ENCODE measurements at regions of chr1 and their contacts with region 1.

Region 1: GRCh38 chr1:224623743-224624333 is 7.7 kb downstream of the CNIH3 start:
- DNase-seq: peak; percentile 94
- H3K4me3 Mint-ChIP-seq: peak overlapping the region; percentile 65
- H3K27ac Mint-ChIP-seq: peak overlapping the region; percentile 98
- H3K4me1 Mint-ChIP-seq: peaks cover 49% of the 10 kb centered on the region
- H3K27me3 Mint-ChIP-seq: peaks cover 21% of the 10 kb centered on the region

Region 2: DNA sequence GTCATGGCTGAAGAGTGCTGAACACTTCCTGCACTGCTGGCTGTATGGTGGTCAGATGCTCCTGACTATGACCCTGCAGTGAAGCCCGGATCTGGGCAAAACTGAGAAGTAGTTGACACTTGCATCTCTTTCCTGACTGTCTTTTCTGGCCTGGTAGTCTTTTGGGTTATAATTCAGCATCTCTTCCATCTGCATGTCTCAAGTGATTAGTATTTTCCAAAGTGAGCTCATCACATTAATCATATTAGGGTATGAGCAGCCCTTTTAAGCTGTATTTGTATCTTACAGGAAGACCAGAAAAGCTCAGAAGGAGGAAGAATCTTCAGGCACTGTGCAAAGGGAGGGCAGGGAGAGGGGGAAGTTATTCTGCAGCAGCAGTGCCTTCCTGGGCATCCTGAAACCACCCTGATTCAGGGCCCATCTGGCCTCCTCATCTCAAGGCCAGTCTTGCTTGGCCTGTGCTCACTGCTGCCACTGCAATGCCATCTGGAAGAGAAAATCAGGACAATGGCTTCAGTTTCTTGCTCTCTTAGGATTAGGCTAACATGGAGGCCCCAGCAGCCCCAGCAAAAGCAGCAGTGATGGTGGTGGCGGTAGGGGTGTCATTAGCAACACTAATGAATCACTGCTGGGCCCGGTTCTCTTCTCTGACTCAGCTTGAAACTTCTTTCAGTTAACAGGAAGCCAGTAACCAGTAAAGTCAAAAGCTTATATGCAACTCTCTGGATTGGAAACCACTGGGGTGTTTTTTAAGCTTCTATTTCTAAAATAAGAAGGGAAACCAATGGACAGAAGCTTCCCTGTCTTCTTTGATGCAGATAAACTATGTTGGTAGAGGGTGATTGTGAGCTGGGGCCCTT is 125.9 kb before region 1 on chr1:
- CTCF ChIA-PET with region 1: no interaction called
- POLR2A ChIA-PET with region 1: interaction called, 24 read pairs
- DNase-seq: peak; percentile 86
- H3K4me3 Mint-ChIP-seq: peak overlapping the region; percentile 52
- H3K27ac Mint-ChIP-seq: peak overlapping the region; percentile 95
- H3K4me1 Mint-ChIP-seq: peaks cover 63% of the 10 kb centered on the region
- H3K27me3 Mint-ChIP-seq: no peaks in the 10 kb centered on the region

Region 3: GRCh38 chr1:224542783-224543440 is 80.9 kb before region 1 on chr1:
- CTCF ChIA-PET with region 1: no interaction called
- POLR2A ChIA-PET with region 1: interaction called, 10 read pairs
- DNase-seq: peak; percentile 58
- H3K4me3 Mint-ChIP-seq: no peak overlapping the region
- H3K27ac Mint-ChIP-seq: peak overlapping the region; percentile 21
- H3K4me1 Mint-ChIP-seq: peaks cover 27% of the 10 kb centered on the region
- H3K27me3 Mint-ChIP-seq: peaks cover 11% of the 10 kb centered on the region

Measured in activated CD4-positive, alpha-beta memory T cell treated with anti-CD3 and anti-CD28 coated beads, Interleukin-2, amount 10 ng/mL, durations not matched to agents 7 days and 5 days (primary cell).